Activated B cell treated with CpG ODN at 0.5 μM for 24 hours (primary cell): ENCODE measurements at regions of chr2 and their contacts with region 1.

Region 1: GRCh38 chr2:240143801-240144648 is 3.6 kb upstream of the OTOS start:
- DNase-seq: peak; percentile 79
- ATAC-seq: peak; percentile 98
- H3K4me3 Mint-ChIP-seq: no peak overlapping the region
- H3K27ac Mint-ChIP-seq: no peak overlapping the region
- H3K4me1 Mint-ChIP-seq: peaks cover 1% of the 10 kb centered on the region
- H3K27me3 Mint-ChIP-seq: peaks cover 15% of the 10 kb centered on the region
- CTCF ChIP-seq: peak; percentile 44

Region 2: GRCh38 chr2:238370823-238371372 is 1773.1 kb before region 1 on chr2:
- CTCF ChIA-PET with region 1: no interaction called
- POLR2A ChIA-PET with region 1: no interaction called
- intact Hi-C with region 1: loop called (anchors 2 kb)
- DNase-seq: no peak
- ATAC-seq: peak; percentile 66
- H3K4me3 Mint-ChIP-seq: no peak overlapping the region
- H3K27ac Mint-ChIP-seq: no peak overlapping the region
- H3K4me1 Mint-ChIP-seq: no peaks in the 10 kb centered on the region
- H3K27me3 Mint-ChIP-seq: no peaks in the 10 kb centered on the region
- CTCF ChIP-seq: no peak

Region 3: DNA sequence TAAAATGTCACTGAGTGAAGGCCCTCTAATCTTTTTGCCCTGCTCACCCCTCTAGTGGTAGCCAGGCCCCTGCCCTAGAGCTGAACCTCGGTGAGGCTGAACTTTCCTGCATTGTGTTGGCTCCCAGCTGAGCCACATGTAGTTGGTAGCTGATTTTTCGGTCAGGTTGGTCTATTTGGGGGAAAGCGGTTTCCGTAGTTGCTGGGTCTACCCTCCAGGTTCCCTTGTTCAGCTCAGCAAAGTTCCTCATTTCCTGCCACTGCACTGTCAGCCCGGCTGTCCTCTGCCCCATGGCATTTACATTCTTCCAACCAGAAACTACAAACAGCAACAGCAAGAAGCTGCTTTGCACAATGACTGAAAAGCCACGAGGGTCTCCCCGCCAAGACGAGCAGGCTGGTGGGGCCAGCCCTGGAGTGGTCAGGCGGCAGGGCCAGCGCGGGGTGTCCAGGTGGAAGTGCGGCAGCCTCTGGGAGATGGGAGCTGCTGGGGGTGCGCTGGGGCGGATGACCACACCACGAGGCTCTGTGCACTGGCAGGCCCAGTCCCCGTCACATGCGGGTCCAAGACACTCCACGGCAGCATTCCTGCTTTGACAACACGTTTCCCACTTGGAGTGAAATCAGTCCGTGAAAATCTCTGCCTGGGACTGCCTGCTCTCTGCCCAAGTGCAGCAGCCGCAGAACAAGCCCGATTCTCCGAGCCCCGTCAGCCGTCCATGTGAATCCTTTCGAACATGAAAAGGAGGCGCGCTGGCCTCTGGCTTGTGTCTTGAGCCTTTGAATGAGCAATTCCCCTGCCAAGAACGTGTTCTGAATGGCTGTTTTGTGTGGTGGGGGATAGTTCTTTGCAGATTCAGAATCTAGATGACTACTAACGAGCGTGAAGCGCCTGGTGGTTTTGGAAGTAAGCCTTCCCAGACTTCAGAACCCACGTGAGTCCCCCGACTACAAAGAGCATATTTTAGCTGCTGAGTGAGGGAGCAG is 1557.9 kb before region 1 on chr2:
- CTCF ChIA-PET with region 1: no interaction called
- POLR2A ChIA-PET with region 1: no interaction called
- intact Hi-C with region 1: no loop called
- DNase-seq: no peak
- ATAC-seq: no peak
- H3K4me3 Mint-ChIP-seq: no peak overlapping the region
- H3K27ac Mint-ChIP-seq: no peak overlapping the region
- H3K4me1 Mint-ChIP-seq: no peaks in the 10 kb centered on the region
- H3K27me3 Mint-ChIP-seq: no peaks in the 10 kb centered on the region
- CTCF ChIP-seq: no peak

Region 4: GRCh38 chr2:238784671-238785527 is 1359.1 kb before region 1 on chr2:
- CTCF ChIA-PET with region 1: interaction called, 3 read pairs
- POLR2A ChIA-PET with region 1: no interaction called
- intact Hi-C with region 1: loop called (anchors 5 kb)
- DNase-seq: no peak
- ATAC-seq: no peak
- H3K4me3 Mint-ChIP-seq: no peak overlapping the region
- H3K27ac Mint-ChIP-seq: no peak overlapping the region
- H3K4me1 Mint-ChIP-seq: no peaks in the 10 kb centered on the region
- H3K27me3 Mint-ChIP-seq: peaks cover 2% of the 10 kb centered on the region
- CTCF ChIP-seq: no peak

Region 5: DNA sequence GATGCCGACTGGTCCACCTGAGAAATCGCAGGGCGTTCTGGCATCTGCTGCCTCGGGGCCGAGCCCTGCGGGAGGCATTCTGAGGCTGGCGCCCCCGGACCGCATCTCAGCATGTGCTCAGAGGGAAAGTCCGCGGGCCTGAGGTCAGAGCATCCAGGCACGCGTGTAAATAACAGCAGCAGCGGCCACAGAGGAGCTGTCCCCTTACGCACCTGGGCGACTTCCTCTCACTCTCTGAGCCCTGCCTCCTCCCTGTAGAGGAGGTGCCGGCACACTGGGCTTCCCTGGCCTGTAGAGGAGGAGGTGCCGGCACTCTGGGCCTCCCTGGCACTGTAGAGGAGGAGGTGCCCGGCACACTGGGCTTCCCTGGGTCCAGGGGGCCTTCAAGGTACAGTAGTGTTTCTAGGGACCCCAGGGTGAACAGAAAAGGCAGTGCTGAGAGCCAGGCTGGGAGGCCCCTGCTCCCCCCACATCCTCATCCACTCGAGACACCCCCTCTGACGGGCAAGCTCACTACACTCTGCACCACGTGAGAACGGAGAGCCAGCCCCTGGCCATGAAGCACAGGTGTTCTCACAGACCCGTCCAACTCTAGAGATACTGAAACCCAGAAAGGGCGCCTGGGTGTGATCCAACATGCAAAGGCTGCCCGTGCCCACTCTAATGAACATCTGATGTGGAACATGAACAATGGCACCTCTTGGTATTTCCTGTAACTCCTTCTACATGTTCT is 1006.7 kb before region 1 on chr2:
- CTCF ChIA-PET with region 1: no interaction called
- POLR2A ChIA-PET with region 1: no interaction called
- intact Hi-C with region 1: loop called (anchors 10 kb)
- DNase-seq: no peak
- ATAC-seq: no peak
- H3K4me3 Mint-ChIP-seq: no peak overlapping the region
- H3K27ac Mint-ChIP-seq: no peak overlapping the region
- H3K4me1 Mint-ChIP-seq: no peaks in the 10 kb centered on the region
- H3K27me3 Mint-ChIP-seq: no peaks in the 10 kb centered on the region
- CTCF ChIP-seq: no peak

Region 6: DNA sequence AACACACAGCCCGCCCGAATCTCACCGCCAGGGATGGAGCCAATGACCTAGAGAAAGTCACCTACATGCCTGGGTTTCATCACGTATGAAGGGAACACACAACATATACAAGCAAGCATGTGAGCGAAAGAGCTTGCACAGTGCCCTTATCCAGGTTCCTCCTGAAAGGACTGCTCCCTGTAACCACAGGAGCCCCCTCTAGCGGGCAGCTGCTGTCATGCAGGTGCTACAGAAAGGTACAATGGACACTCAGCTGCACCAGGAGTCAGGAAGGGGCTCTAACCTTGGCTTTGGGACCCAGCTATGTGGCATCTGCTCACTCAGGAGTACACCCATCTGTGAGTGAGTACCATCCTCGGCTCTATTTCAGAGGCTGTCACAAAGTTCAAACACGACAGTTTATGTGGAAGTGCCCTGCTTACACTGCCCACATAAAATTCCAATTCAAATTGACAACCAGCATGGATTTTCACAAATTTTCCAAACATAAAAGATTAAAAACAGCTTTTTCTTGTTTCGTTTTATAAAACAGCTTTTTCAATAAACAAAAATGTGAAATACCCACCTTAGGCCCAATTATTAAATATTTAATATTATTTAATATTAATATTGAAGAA is 122.4 kb before region 1 on chr2:
- CTCF ChIA-PET with region 1: no interaction called
- POLR2A ChIA-PET with region 1: interaction called, 10 read pairs
- intact Hi-C with region 1: no loop called
- DNase-seq: peak; percentile 50
- ATAC-seq: peak; percentile 23
- H3K4me3 Mint-ChIP-seq: no peak overlapping the region
- H3K27ac Mint-ChIP-seq: no peak overlapping the region
- H3K4me1 Mint-ChIP-seq: peaks cover 16% of the 10 kb centered on the region
- H3K27me3 Mint-ChIP-seq: no peaks in the 10 kb centered on the region
- CTCF ChIP-seq: no peak

Region 7: DNA sequence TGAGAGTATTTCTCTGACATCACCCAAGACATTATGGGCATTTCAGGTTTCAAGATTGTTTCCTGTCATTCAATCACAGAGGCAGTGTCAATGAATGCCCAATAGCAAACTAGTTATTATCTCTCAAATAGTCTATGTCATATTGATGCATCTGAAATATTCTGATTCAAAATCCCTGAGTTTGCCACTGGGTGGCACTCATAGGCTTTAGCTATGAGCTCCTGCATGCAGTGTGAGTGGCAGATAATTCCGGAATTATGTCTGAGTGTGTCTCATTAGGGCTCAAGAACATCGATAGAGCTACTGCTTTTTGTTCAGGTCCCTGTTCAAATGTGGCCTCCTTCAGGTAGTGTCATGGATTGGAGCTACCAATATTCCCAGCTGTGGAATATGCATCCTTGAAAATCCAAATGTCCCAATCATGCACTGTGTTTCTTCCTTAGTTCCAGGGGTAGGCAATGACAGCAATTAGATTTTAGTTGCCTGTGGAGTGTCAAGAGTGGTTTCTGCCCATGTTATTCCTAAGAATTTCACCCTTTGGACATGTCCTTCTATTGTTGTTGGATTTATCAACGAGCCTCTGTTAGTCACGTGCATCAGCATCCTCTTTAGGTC is 82.9 kb before region 1 on chr2:
- CTCF ChIA-PET with region 1: interaction called, 106 read pairs
- POLR2A ChIA-PET with region 1: no interaction called
- intact Hi-C with region 1: loop called (anchors 1 kb)
- DNase-seq: no peak
- ATAC-seq: peak; percentile 65
- H3K4me3 Mint-ChIP-seq: no peak overlapping the region
- H3K27ac Mint-ChIP-seq: no peak overlapping the region
- H3K4me1 Mint-ChIP-seq: no peaks in the 10 kb centered on the region
- H3K27me3 Mint-ChIP-seq: peaks cover 23% of the 10 kb centered on the region
- CTCF ChIP-seq: no peak